ENCODE measurements at regions of chr2 and their contacts with region 1.

Region 1: GRCh38 chr2:46010925-46011490 is 286.2 kb upstream of the EPAS1 start:
- DNase-seq: no peak

Region 2: GRCh38 chr2:46134531-46135181 is 123.6 kb after region 1 on chr2:
- intact Hi-C with region 1: no loop called
- DNase-seq: no peak

Region 3: GRCh38 chr2:46364797-46365457 is 353.9 kb after region 1 on chr2:
- intact Hi-C with region 1: loop called in 1 of 2 experiments (anchors 5 kb)
- DNase-seq: no peak

Region 4: GRCh38 chr2:46458763-46459500 is 447.9 kb after region 1 on chr2:
- intact Hi-C with region 1: loop called in 1 of 2 experiments (anchors 5 kb)
- DNase-seq: no peak